ENCODE measurements at regions of chr1 and their contacts with region 1.

Region 1: GRCh38 chr1:179968994-179969919 is 14.6 kb downstream of the CEP350 start:
- DNase-seq: no peak
- ATAC-seq: no peak
- H3K4me3 ChIP-seq: no peak overlapping the region
- H3K4me3 Mint-ChIP-seq: peak overlapping the region in 2 of 3 donors; percentile 2 to 48
- H3K27ac ChIP-seq: no peak overlapping the region
- H3K27ac Mint-ChIP-seq: peak overlapping the region in 1 of 2 donors; percentile 64
- H3K4me1 ChIP-seq: peaks cover 11 to 20% of the 10 kb centered on the region in 2 experiments
- H3K4me1 Mint-ChIP-seq: peaks cover 67 to 72% (median 68%) of the 10 kb centered on the region in 3 donors
- H3K27me3 ChIP-seq: no peaks in the 10 kb centered on the region
- H3K27me3 Mint-ChIP-seq: no peaks in the 10 kb centered on the region

Region 2: GRCh38 chr1:180156631-180157091 is 187.4 kb after region 1 on chr1:
- CTCF ChIA-PET with region 1: interaction called in 1 of 2 experiments, 10 read pairs
- POLR2A ChIA-PET with region 1: no interaction called
- DNase-seq: no peak
- ATAC-seq: no peak
- H3K4me3 ChIP-seq: no peak overlapping the region
- H3K4me3 Mint-ChIP-seq: peak overlapping the region in 1 of 3 donors; percentile 87
- H3K27ac ChIP-seq: no peak overlapping the region
- H3K27ac Mint-ChIP-seq: no peak overlapping the region
- H3K4me1 ChIP-seq: peaks cover 7 to 16% of the 10 kb centered on the region in 2 experiments
- H3K4me1 Mint-ChIP-seq: peaks cover 25 to 54% (median 45%) of the 10 kb centered on the region in 3 donors
- H3K27me3 ChIP-seq: no peaks in the 10 kb centered on the region
- H3K27me3 Mint-ChIP-seq: no peaks in the 10 kb centered on the region

Region 3: DNA sequence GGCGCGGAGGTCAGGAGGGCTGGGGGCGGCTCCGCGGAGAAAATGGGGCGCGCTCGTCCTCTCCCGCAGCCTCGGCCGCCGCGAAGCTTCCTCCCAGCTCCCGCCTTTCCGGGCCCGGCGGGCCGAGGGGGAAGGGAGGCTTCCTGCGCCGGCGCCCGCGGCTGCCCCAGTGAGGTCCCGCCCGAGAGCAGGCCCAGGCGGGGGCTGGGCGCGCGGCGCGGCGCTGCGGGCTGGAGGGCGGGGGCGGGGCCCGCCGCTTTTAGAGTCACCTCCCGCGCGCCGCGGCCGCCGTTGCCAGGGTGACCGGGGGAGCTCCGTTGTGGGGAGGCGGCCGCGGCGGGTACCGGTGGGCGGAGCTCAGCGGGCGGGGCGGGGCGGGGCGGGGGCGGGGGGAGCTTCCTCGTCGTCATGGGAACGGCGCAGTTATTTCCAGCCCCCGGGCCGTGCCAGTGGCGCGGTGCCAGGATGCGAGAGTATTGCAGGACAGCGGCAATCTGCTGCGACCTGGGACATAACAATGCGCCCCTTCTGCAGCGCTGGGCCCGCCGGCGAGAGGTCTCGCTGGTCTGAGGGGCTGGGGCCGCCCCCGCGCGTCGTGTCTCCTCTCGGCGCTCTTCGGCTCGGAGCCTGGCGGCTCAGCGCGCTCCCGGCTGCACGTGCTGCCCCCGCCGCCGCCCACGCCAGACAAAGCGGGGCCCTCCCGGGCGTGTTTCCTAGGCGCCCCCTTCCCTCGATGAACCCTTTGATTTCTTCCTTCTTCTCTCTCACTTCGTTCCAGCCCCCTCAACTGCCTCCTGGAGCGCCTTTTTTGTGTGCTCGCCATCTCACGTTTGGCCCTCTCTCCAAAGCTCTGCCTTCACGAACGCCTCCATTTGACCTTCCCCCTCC is 1136.1 kb after region 1 on chr1:
- CTCF ChIA-PET with region 1: no interaction called
- POLR2A ChIA-PET with region 1: interaction called in 1 of 2 experiments, 11 read pairs
- DNase-seq: peak; percentile 86 to 97 (median 92)
- ATAC-seq: peak; percentile 90 to 94 (median 92)
- H3K4me3 ChIP-seq: peak overlapping the region; percentile 58 to 83
- H3K4me3 Mint-ChIP-seq: peak overlapping the region; percentile 77 to 86 (median 85)
- H3K27ac ChIP-seq: peak overlapping the region; percentile 87
- H3K27ac Mint-ChIP-seq: peak overlapping the region; percentile 62 to 90
- H3K4me1 ChIP-seq: peaks cover 29 to 46% of the 10 kb centered on the region in 2 experiments
- H3K4me1 Mint-ChIP-seq: peaks cover 55 to 59% (median 58%) of the 10 kb centered on the region in 3 donors
- H3K27me3 ChIP-seq: peaks cover 0 to 11% of the 10 kb centered on the region in 2 experiments
- H3K27me3 Mint-ChIP-seq: peaks cover 0 to 5% of the 10 kb centered on the region in 2 donors